Psoas muscle (tissue), 8 donors: ENCODE measurements at regions of chr6 and their contacts with region 1.

Region 1: DNA sequence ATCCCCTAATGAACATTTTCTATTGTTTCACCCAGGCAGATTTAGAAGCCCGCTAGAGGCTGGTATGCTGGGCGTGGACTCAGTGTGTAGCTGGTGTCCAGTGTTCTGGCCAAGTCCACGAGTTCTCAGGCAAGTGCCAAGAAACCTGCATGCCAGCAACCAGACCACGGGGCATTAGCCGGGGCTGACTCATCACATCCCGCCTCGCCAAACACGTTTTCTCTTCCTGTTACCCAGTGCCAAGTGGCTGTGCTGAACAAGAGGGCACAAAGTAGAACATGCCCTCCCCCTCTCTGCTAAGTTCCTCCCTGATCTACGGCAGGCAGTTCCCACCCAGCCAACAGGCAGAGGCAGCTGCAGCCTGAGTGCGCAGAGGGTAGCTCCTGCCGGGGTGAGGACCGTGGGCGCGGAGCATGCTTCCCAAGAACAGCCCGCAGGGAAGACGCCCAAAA is 29.6 kb downstream of the RAMACL start:
- DNase-seq: peak; percentile 89 to 96
- ATAC-seq: peak; percentile 90 to 93 (median 92)
- H3K4me3 ChIP-seq: peak overlapping the region; percentile 37
- H3K27ac ChIP-seq: peak overlapping the region; percentile 85
- H3K4me1 ChIP-seq: peaks cover 50% of the 10 kb centered on the region
- H3K27me3 ChIP-seq: no peaks in the 10 kb centered on the region
- CTCF ChIP-seq: no peak

Region 2: GRCh38 chr6:166032366-166033171 is 524.3 kb before region 1 on chr6:
- intact Hi-C with region 1: no loop called
- DNase-seq: peak; percentile 53 to 60
- ATAC-seq: peak; percentile 27 to 53 (median 34)
- H3K4me3 ChIP-seq: no peak overlapping the region
- H3K27ac ChIP-seq: no peak overlapping the region
- H3K4me1 ChIP-seq: no peaks in the 10 kb centered on the region
- H3K27me3 ChIP-seq: no peaks in the 10 kb centered on the region
- CTCF ChIP-seq: no peak

Region 3: GRCh38 chr6:166515072-166515810 is 41.7 kb before region 1 on chr6:
- intact Hi-C with region 1: no loop called
- DNase-seq: peak; percentile 52 to 69
- ATAC-seq: peak; percentile 67 to 90 (median 90)
- H3K4me3 ChIP-seq: no peak overlapping the region
- H3K27ac ChIP-seq: no peak overlapping the region
- H3K4me1 ChIP-seq: no peaks in the 10 kb centered on the region
- H3K27me3 ChIP-seq: no peaks in the 10 kb centered on the region
- CTCF ChIP-seq: peak; percentile 26

Region 4: DNA sequence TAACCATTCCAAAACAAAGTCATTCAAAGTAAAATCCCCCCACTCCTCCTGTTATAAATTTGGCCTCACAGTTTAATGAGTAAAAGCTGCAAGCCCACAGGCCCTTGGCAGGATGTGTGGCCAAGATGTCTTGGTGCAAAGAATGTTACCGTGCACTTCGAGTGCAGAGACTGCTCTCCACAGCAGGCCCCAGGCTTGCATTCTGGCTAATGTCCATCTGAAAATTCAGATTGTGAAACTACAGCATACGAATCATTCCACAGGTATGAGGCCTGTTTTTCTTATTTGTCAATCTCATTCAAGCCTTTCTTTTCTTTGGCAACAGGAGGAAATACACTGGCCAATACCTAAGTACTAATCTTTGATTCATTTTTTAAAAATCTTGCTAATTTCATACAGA is 63.0 kb after region 1 on chr6:
- intact Hi-C with region 1: loop called (anchors 5 kb)
- DNase-seq: peak in 1 of 2 donors; percentile 52
- ATAC-seq: peak; percentile 70 to 82 (median 77)
- H3K4me3 ChIP-seq: no peak overlapping the region
- H3K27ac ChIP-seq: peak overlapping the region; percentile 66
- H3K4me1 ChIP-seq: peaks cover 66% of the 10 kb centered on the region
- H3K27me3 ChIP-seq: no peaks in the 10 kb centered on the region
- CTCF ChIP-seq: no peak

Region 5: GRCh38 chr6:166627033-166627874 is 70.4 kb after region 1 on chr6 and contains the start of gene RPS6KA2:
- intact Hi-C with region 1: loop called (anchors 5 kb)
- DNase-seq: peak; percentile 100
- ATAC-seq: peak; percentile 92 to 94 (median 93)
- H3K4me3 ChIP-seq: peak within 1 kb of the TSS; percentile 82
- H3K27ac ChIP-seq: peak within 1 kb of the TSS; percentile 98
- H3K4me1 ChIP-seq: peaks cover 49% of the 10 kb centered on the region
- H3K27me3 ChIP-seq: no peaks in the 10 kb centered on the region
- CTCF ChIP-seq: no peak
- total RNA-seq, gene RPS6KA2: 14.2 to 40.4 (median 28.4) TPM

Region 6: DNA sequence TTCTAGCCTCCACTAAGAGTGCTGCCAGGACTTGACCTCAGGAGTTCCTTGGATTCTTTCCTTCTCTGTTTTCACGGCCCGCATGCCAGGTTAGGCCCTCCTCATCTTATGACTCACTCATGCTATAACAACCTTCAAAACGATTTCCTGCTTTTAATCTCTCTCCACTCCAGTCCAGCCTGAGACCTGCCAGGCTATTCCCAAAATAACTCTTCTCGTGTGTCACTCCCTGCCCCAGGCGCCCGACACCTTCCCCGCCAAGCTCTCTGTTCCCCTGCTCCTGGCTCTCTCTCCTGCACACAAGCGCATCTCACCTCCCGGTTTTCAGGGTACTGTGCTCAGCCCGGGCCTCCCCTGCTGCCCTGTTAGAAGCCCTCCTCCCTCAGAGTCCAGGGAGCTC is 134.3 kb after region 1 on chr6:
- intact Hi-C with region 1: loop called (anchors 5 kb)
- DNase-seq: peak; percentile 52 to 86
- ATAC-seq: peak; percentile 87 to 91 (median 90)
- H3K4me3 ChIP-seq: peak overlapping the region; percentile 63
- H3K27ac ChIP-seq: peak overlapping the region; percentile 98
- H3K4me1 ChIP-seq: peaks cover 31% of the 10 kb centered on the region
- H3K27me3 ChIP-seq: no peaks in the 10 kb centered on the region
- CTCF ChIP-seq: no peak